Thyroid gland (tissue), 4 donors: ENCODE measurements at regions of chr7 and their contacts with region 1.

Region 1: DNA sequence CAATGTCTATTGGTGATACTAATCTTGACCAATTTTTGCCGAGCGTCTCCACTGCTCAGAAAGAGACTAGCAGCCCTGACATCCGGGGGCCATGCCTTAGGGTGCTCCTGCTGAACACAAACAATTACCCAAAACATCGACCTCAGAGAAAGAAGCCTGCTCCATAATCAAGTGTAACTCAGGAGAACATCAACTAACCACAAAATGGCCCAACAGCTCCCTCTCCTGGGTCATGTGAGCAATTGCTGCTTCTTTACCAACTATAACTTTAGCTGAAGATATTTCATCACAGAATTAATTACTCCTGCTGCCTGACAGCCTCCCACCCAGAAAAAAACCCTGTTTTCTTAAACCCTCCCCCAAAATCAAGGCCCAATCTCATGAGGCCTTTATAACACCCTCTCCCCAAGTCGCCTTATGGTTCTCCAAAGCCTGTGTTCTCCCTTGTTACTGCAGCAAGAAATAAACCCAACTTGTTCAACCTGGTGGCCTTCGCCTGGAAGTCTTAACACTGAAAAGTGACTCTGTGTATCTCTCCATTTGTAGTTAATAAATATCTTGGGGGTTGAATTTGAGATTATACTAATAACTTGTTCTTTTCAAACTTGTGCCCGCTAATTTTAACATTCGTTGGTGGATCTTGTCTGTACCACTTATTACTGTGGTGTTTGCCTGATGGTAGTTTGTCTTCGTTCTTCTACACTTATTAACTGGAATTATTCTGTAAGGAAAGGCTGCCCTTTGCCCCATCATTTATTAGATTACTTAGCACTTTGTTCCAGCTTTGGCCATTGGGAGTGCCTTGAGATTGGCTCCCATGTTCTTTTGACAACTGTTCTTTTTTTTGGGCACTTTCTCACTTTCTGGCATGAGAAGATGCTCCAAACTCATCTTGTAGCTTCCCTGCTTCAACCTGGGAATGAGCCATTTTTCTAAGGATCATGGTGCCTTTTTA is 21.2 kb upstream of the RAMP3 start:
- DNase-seq: peak; percentile 41 to 69
- H3K4me3 ChIP-seq: no peak overlapping the region
- H3K27ac ChIP-seq: no peak overlapping the region
- H3K4me1 ChIP-seq: no peaks in the 10 kb centered on the region
- H3K27me3 ChIP-seq: no peaks in the 10 kb centered on the region
- CTCF ChIP-seq: peak; percentile 61 to 94 (median 84)
- POLR2A ChIP-seq: no peak

Region 2: GRCh38 chr7:44565097-44565794 is 571.1 kb before region 1 on chr7:
- intact Hi-C with region 1: loop called (anchors 10 kb)
- DNase-seq: peak; percentile 59 to 64
- H3K4me3 ChIP-seq: no peak overlapping the region
- H3K27ac ChIP-seq: no peak overlapping the region
- H3K4me1 ChIP-seq: no peaks in the 10 kb centered on the region
- H3K27me3 ChIP-seq: no peaks in the 10 kb centered on the region
- CTCF ChIP-seq: peak; percentile 80 to 98 (median 87)
- POLR2A ChIP-seq: no peak

Region 3: DNA sequence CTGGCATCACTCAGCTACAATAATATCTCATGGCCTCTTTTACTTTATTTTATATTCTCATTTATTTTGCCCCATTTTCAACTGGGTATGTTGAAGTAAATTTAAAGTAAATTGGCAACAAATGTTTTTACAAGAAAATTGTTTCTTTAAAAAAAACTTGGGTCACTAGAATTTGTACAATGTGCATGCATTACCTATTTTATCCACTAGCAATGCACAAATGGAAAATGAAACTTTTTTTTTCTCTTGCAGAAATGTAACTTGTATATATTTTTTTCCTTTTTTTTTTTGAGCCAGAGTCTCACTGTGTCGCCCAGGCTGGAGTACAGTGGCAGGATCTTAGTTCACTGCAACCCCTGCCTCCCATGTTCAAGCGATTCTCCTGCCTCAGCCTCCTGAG is 278.2 kb before region 1 on chr7:
- intact Hi-C with region 1: loop called (anchors 2 kb)
- DNase-seq: no peak
- H3K4me3 ChIP-seq: no peak overlapping the region
- H3K27ac ChIP-seq: no peak overlapping the region
- H3K4me1 ChIP-seq: no peaks in the 10 kb centered on the region
- H3K27me3 ChIP-seq: no peaks in the 10 kb centered on the region
- CTCF ChIP-seq: peak in 1 of 6 experiments; percentile 29
- POLR2A ChIP-seq: no peak

Region 4: GRCh38 chr7:44921607-44922359 is 214.6 kb before region 1 on chr7:
- intact Hi-C with region 1: loop called (anchors 10 kb)
- DNase-seq: peak; percentile 89 to 93
- H3K4me3 ChIP-seq: no peak overlapping the region
- H3K27ac ChIP-seq: no peak overlapping the region
- H3K4me1 ChIP-seq: peaks cover 0 to 12% of the 10 kb centered on the region in 2 donors
- H3K27me3 ChIP-seq: no peaks in the 10 kb centered on the region
- CTCF ChIP-seq: peak; percentile 60 to 85 (median 74)
- POLR2A ChIP-seq: no peak

Region 5: DNA sequence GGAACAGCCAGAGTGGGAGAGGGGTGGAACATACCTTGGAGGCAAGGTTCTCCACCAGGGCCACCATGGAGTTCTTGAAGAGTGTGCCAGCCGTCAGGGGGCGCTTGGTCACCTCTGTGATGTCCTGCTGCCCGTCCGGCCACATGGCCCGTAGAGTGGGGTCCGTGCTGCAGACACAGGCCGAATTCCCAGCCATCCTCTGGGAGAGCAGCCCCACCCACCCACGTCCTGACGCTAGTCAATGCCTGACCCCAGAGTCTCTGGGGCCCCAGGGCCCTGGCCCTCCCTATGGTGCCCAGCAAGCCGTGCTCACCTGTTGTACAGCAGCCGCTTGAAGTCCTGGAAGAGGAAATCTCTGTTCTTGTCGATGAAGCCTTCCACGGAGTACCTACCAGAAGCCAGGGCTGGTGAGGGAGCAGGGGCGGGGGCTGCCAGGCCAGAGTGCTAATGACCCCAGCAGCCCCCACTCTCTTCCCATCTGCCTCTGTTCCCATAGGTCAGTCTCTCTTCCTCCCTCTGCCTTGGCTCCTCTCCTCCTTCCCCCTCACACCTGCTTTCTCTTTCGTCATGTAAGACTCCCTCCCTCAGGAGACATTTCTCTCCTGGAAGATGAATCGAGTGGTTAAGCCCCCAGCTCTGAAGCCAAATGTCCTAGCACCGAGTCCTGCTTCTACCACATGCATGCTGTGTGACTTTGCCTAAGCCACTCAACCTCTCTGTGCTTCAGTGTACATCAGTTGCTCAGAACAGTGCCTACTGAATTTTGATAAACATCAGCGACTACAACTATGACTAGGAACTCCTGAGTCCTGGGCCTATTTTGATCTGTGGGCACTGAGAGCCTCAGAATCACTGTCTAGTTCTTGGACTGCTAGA is 168.6 kb before region 1 on chr7:
- intact Hi-C with region 1: loop called (anchors 5 kb)
- DNase-seq: peak; percentile 67
- H3K4me3 ChIP-seq: no peak overlapping the region
- H3K27ac ChIP-seq: no peak overlapping the region
- H3K4me1 ChIP-seq: peaks cover 10 to 21% of the 10 kb centered on the region in 2 donors
- H3K27me3 ChIP-seq: no peaks in the 10 kb centered on the region
- CTCF ChIP-seq: peak in 4 of 6 experiments; percentile 4 to 55 (median 45)
- POLR2A ChIP-seq: no peak

Region 6: GRCh38 chr7:45052011-45052410 is 84.4 kb before region 1 on chr7:
- intact Hi-C with region 1: no loop called
- DNase-seq: peak; percentile 78 to 85
- H3K4me3 ChIP-seq: no peak overlapping the region
- H3K27ac ChIP-seq: no peak overlapping the region
- H3K4me1 ChIP-seq: peaks cover 0 to 6% of the 10 kb centered on the region in 2 donors
- H3K27me3 ChIP-seq: no peaks in the 10 kb centered on the region
- CTCF ChIP-seq: no peak
- POLR2A ChIP-seq: no peak

Region 7: GRCh38 chr7:45174966-45175765 is 38.8 kb after region 1 on chr7:
- intact Hi-C with region 1: no loop called
- DNase-seq: no peak
- H3K4me3 ChIP-seq: no peak overlapping the region
- H3K27ac ChIP-seq: no peak overlapping the region
- H3K4me1 ChIP-seq: no peaks in the 10 kb centered on the region
- H3K27me3 ChIP-seq: no peaks in the 10 kb centered on the region
- CTCF ChIP-seq: no peak
- POLR2A ChIP-seq: no peak